SK-N-SH (cell line): ENCODE measurements at regions of chr2 and their contacts with region 1.

Region 1: GRCh38 chr2:187581125-187581896 is 27.1 kb upstream of the TFPI start:
- DNase-seq: peak; percentile 8
- H3K4me3 ChIP-seq: peak overlapping the region in 1 of 2 experiments; percentile 45; a peak in 2 of 4 replicates
- H3K27ac ChIP-seq: peak overlapping the region in 1 of 2 experiments; percentile 35; a peak in 2 of 4 replicates
- H3K4me1 ChIP-seq: peaks cover 0 to 3% of the 10 kb centered on the region in 2 experiments; a peak in 3 of 4 replicates
- H3K27me3 ChIP-seq: no peaks in the 10 kb centered on the region
- CTCF ChIP-seq: peak; percentile 79
- EP300 ChIP-seq: no peak
- RAD21 ChIP-seq: peak; percentile 66

Region 2: GRCh38 chr2:187499941-187500532 is 81.3 kb before region 1 on chr2:
- CTCF ChIA-PET with region 1: interaction called, 335 read pairs
- POLR2A ChIA-PET with region 1: no interaction called
- DNase-seq: peak; percentile 22
- H3K4me3 ChIP-seq: no peak overlapping the region; a peak in 1 of 4 replicates
- H3K27ac ChIP-seq: peak overlapping the region in 1 of 2 experiments; percentile 54; a peak in 2 of 4 replicates
- H3K4me1 ChIP-seq: peaks cover 11 to 21% of the 10 kb centered on the region in 2 experiments
- H3K27me3 ChIP-seq: no peaks in the 10 kb centered on the region
- CTCF ChIP-seq: peak; percentile 88
- EP300 ChIP-seq: no peak
- RAD21 ChIP-seq: peak; percentile 98

Region 3: GRCh38 chr2:187594801-187595200 is 13.5 kb after region 1 on chr2:
- CTCF ChIA-PET with region 1: interaction called, 40 read pairs
- POLR2A ChIA-PET with region 1: no interaction called
- DNase-seq: no peak
- H3K4me3 ChIP-seq: no peak overlapping the region
- H3K27ac ChIP-seq: no peak overlapping the region
- H3K4me1 ChIP-seq: no peaks in the 10 kb centered on the region; a peak in 1 of 4 replicates
- H3K27me3 ChIP-seq: no peaks in the 10 kb centered on the region
- CTCF ChIP-seq: peak; percentile 62
- EP300 ChIP-seq: no peak
- RAD21 ChIP-seq: peak; percentile 66

Region 4: GRCh38 chr2:188512456-188512855 is 931.1 kb after region 1 on chr2:
- CTCF ChIA-PET with region 1: interaction called, 13 read pairs
- POLR2A ChIA-PET with region 1: no interaction called
- DNase-seq: peak; percentile 14
- H3K4me3 ChIP-seq: peak overlapping the region in 1 of 2 experiments; percentile 0; a peak in 1 of 4 replicates
- H3K27ac ChIP-seq: peak overlapping the region in 1 of 2 experiments; percentile 81; a peak in 2 of 4 replicates
- H3K4me1 ChIP-seq: peaks cover 3 to 15% of the 10 kb centered on the region in 2 experiments; a peak in 3 of 4 replicates
- H3K27me3 ChIP-seq: no peaks in the 10 kb centered on the region
- CTCF ChIP-seq: peak; percentile 84
- EP300 ChIP-seq: no peak
- RAD21 ChIP-seq: peak; percentile 96

Region 5: DNA sequence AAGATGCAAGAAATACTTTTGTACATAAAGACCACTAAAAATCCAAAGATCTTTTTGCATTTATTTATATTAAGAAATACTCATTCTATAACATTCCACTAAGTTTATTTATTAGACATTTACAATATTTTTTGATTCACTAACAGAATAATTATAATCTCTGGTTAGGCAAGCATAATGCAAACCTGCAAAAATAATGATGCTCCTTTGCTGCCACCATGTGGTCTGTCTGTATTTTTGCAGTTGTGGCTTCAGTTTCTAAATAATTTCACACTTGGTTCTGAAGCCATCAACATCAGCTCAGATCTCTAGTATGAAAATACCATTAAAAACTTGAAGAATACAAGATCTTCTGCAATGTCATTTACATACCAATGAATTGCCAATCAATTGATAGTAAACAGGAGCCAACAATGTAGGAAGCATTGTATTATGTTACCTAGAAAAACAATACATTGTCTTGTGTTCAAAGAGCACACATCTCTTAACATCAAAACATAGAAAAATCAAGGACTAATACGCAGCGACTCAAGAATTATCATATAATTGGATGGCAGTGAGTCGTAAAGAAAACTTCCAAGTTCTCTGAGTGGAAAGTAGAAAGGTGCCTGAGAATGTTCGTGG is 1831.1 kb after region 1 on chr2:
- CTCF ChIA-PET with region 1: interaction called, 20 read pairs
- POLR2A ChIA-PET with region 1: no interaction called
- DNase-seq: peak; percentile 32
- H3K4me3 ChIP-seq: no peak overlapping the region
- H3K27ac ChIP-seq: peak overlapping the region; percentile 89 to 100
- H3K4me1 ChIP-seq: peaks cover 18 to 33% of the 10 kb centered on the region in 2 experiments; a peak in 3 of 4 replicates
- H3K27me3 ChIP-seq: no peaks in the 10 kb centered on the region
- CTCF ChIP-seq: peak; percentile 79
- EP300 ChIP-seq: no peak
- RAD21 ChIP-seq: peak; percentile 94